ENCODE measurements at regions of chr12 and their contacts with region 1.

Region 1: DNA sequence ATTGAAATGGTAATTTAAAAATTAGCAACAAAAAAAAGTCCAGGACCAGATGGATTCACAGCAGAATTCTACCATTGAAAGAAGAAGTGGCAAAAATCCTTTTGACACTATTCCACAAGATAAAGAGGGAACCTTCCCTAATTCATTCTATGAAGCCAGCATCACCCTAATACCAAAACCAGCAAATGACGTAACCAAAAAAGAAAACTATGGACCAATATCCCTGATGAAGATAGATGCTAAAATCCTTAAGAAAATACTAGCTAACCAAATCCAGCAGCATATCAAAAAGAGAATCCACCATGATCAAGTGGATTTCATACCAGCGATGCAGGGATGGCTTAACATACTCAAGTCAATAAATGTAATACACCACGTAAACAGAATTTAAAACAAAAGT is 30.3 kb downstream of the ALG10B start:
- DNase-seq: no peak
- H3K4me3 ChIP-seq: no peak overlapping the region
- H3K27ac ChIP-seq: no peak overlapping the region
- H3K4me1 ChIP-seq: peaks cover 0 to 3% (median 0%) of the 10 kb centered on the region in 4 donors
- H3K27me3 ChIP-seq: no peaks in the 10 kb centered on the region
- CTCF ChIP-seq: no peak
- EP300 ChIP-seq: no peak
- POLR2A ChIP-seq: no peak

Region 2: GRCh38 chr12:38291160-38291559 is 55.7 kb before region 1 on chr12:
- intact Hi-C with region 1: no loop called
- DNase-seq: no peak
- H3K4me3 ChIP-seq: no peak overlapping the region
- H3K27ac ChIP-seq: no peak overlapping the region
- H3K4me1 ChIP-seq: no peaks in the 10 kb centered on the region
- H3K27me3 ChIP-seq: peaks cover 0 to 10% (median 0%) of the 10 kb centered on the region in 4 donors
- CTCF ChIP-seq: no peak
- EP300 ChIP-seq: no peak
- POLR2A ChIP-seq: no peak

Region 3: GRCh38 chr12:38919191-38919590 is 572.3 kb after region 1 on chr12:
- intact Hi-C with region 1: loop called (anchors 5 kb)
- DNase-seq: no peak
- H3K4me3 ChIP-seq: no peak overlapping the region
- H3K27ac ChIP-seq: no peak overlapping the region
- H3K4me1 ChIP-seq: no peaks in the 10 kb centered on the region
- H3K27me3 ChIP-seq: no peaks in the 10 kb centered on the region
- CTCF ChIP-seq: no peak
- EP300 ChIP-seq: no peak
- POLR2A ChIP-seq: no peak